ENCODE measurements at regions of chr3 and their contacts with region 1.

Region 1: DNA sequence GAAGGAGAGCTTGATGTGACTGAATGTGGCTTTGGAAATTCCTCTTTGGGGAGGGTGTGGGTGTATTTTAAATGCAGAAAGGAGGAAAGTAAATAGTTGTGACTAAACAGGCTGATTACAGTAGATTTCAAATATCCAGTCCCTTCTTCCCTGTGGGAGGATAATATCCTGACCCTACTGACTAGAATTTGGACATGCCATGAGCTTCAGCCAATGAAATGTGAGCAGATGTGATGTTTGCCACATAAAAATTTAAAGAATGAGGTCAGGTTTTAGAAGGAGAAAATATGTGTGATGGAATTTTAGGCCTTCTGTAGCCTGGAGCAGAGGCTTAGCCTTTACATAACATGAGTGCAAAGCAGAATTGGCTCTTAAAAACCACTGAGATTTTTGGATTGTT is 1218.9 kb downstream of the ROBO2 start:
- DNase-seq: peak; percentile 94
- H3K4me3 ChIP-seq: no peak overlapping the region
- H3K27me3 ChIP-seq: no peaks in the 10 kb centered on the region
- CTCF ChIP-seq: no peak

Region 2: GRCh38 chr3:77427528-77427927 is 831.3 kb before region 1 on chr3:
- CTCF ChIA-PET with region 1: no interaction called
- POLR2A ChIA-PET with region 1: interaction called, 13 read pairs
- DNase-seq: no peak
- H3K4me3 ChIP-seq: no peak overlapping the region
- H3K27me3 ChIP-seq: no peaks in the 10 kb centered on the region
- CTCF ChIP-seq: no peak

Region 3: DNA sequence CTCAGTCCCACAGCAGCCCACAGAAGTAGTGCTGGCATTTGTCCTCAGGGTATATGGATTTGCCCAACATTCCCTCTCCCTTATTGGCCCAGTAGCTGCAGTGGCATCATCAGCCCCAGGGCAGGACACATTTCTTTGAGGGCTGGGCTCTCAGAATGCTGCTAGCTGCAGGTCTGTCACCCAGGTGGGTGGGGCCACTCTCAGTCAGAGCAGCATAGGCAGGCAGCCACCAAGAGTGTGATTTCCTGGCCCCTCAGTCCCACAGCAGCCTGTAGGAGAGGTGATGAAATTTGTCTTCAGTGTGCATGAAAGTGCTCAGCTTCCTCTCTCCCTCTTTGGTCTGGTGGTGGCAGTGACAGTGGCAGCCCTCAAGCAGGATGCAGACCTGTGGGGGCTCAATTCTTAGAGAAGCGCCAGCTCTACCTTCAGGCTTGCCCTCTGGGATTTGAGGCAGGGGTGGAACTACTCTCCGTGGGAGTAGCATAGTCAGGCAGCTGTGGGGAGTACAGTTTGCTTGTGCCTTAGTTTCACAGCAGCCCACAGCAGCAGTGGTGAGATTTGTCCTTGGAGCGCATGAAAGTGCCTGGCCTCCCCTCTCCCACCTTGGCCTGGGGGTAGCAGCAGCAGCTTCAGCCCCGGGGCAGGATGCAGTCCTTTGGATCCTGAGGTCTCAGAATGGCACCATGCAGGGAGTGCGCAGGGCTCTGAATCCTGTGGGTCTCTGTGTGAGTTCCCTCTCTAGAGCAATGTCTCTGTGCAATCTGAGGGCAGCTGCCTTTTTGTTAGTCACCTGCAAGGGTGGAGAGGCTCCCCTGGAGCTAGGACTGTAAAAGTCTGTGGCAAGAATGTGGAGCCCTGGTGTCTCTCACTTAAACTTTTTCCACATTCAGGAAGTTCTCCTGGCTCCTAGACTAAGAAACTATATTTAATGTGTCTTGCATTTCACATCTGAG is 10.2 kb after region 1 on chr3:
- CTCF ChIA-PET with region 1: no interaction called
- POLR2A ChIA-PET with region 1: no interaction called
- DNase-seq: no peak
- H3K4me3 ChIP-seq: no peak overlapping the region
- H3K27me3 ChIP-seq: no peaks in the 10 kb centered on the region
- CTCF ChIP-seq: no peak

Measured in BJ (cell line).